PC-3 (cell line): ENCODE measurements at regions of chr1 and their contacts with region 1.

Region 1: GRCh38 chr1:40338745-40339424 is 21.8 kb upstream of the COL9A2 start:
- DNase-seq: peak; percentile 94
- ATAC-seq: peak; percentile 92
- H3K4me3 ChIP-seq: peak overlapping the region; percentile 53; the same call in 1 of the 2 replicates
- H3K27ac ChIP-seq: no peak overlapping the region
- H3K4me1 ChIP-seq: peaks cover 9% of the 10 kb centered on the region; the same call in 1 of the 2 replicates
- H3K27me3 ChIP-seq: no peaks in the 10 kb centered on the region
- CTCF ChIP-seq: peak; percentile 98

Region 2: GRCh38 chr1:40079774-40080400 is 259.0 kb before region 1 on chr1:
- CTCF ChIA-PET with region 1: interaction called, 6 read pairs
- POLR2A ChIA-PET with region 1: no interaction called
- intact Hi-C with region 1: loop called (anchors 2 kb)
- DNase-seq: no peak
- ATAC-seq: no peak
- H3K4me3 ChIP-seq: no peak overlapping the region
- H3K27ac ChIP-seq: no peak overlapping the region
- H3K4me1 ChIP-seq: peaks cover 15% of the 10 kb centered on the region
- H3K27me3 ChIP-seq: no peaks in the 10 kb centered on the region
- CTCF ChIP-seq: no peak

Region 3: DNA sequence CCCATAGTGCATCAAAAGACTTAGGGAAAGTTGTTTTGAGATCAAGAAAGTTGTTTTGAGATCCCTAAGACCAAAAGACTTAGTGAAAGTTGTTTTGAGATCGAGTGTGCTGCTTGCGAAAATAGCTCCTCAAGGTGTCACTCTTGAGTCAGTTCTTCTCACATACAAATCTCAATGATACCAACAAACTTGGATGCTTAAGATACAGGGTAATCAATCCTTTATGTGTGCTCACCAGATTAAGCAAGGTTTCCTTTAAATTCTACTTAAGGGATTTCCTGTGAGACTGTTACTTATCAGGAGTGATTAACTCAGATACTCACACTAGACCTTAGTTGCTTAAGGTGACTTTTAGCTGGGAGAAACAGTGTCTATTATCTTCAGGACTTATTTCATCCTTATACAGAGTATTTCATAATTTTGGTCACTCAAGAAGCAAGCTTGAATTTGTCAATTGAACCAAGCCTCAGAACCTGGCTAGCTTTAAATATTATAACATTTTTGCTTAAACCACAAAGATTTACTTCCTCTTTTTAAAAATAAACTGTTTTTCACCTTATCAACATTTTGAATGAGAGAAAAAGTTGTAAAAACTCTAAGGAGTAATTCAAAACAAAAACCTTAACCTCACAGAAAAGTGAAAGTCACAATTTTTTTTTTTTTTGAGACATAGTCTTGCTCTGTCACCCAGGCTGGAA is 185.7 kb before region 1 on chr1:
- CTCF ChIA-PET with region 1: interaction called, 12 read pairs
- POLR2A ChIA-PET with region 1: no interaction called
- intact Hi-C with region 1: no loop called
- DNase-seq: peak; percentile 69
- ATAC-seq: peak; percentile 53
- H3K4me3 ChIP-seq: peak overlapping the region; percentile 54
- H3K27ac ChIP-seq: no peak overlapping the region
- H3K4me1 ChIP-seq: peaks cover 28% of the 10 kb centered on the region
- H3K27me3 ChIP-seq: no peaks in the 10 kb centered on the region
- CTCF ChIP-seq: peak; percentile 89

Region 4: DNA sequence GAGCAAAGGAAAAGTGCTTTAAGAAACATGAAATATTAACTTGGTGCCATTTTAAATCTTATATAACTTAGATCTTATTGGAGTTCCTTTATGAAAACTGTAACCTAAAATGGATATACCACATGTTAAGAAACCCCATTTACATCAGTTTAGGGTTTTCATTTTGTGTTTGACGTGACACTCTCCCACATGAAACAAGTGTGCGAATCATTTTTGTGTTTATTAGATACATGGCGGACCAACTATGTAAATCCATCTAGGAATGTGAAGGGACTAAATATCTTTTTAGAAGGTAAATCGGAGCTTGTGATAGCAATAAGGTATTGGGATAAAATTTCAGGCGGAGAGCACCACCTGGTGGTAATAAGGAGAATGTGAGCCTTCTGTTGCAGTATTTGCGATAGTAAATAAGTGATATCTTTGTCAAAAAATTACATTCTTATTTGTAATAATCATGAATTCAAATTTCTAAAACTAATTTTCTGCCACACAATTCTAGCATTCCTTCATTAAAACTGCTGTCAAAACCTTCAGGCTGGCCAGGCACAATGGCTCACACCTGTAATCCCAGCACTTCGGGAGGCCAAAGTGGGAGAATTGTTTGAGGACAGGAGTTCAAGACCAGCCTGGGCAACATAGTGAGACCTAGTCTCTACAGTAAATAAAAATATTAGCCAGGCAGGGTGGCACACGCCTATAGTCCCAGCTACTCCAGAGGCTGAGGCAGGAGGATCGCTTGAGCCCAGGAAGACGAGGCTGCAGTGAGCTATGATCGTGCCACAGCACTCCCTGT is 66.0 kb after region 1 on chr1:
- CTCF ChIA-PET with region 1: interaction called, 16 read pairs
- POLR2A ChIA-PET with region 1: no interaction called
- intact Hi-C with region 1: loop called (anchors 1 kb)
- DNase-seq: peak; percentile 76
- ATAC-seq: peak; percentile 80
- H3K4me3 ChIP-seq: no peak overlapping the region
- H3K27ac ChIP-seq: peak overlapping the region; percentile 5; the same call in 1 of the 2 replicates
- H3K4me1 ChIP-seq: peaks cover 6% of the 10 kb centered on the region; the same call in 1 of the 2 replicates
- H3K27me3 ChIP-seq: no peaks in the 10 kb centered on the region
- CTCF ChIP-seq: peak; percentile 85